ENCODE measurements at regions of chr4 and their contacts with region 1.

Region 1: DNA sequence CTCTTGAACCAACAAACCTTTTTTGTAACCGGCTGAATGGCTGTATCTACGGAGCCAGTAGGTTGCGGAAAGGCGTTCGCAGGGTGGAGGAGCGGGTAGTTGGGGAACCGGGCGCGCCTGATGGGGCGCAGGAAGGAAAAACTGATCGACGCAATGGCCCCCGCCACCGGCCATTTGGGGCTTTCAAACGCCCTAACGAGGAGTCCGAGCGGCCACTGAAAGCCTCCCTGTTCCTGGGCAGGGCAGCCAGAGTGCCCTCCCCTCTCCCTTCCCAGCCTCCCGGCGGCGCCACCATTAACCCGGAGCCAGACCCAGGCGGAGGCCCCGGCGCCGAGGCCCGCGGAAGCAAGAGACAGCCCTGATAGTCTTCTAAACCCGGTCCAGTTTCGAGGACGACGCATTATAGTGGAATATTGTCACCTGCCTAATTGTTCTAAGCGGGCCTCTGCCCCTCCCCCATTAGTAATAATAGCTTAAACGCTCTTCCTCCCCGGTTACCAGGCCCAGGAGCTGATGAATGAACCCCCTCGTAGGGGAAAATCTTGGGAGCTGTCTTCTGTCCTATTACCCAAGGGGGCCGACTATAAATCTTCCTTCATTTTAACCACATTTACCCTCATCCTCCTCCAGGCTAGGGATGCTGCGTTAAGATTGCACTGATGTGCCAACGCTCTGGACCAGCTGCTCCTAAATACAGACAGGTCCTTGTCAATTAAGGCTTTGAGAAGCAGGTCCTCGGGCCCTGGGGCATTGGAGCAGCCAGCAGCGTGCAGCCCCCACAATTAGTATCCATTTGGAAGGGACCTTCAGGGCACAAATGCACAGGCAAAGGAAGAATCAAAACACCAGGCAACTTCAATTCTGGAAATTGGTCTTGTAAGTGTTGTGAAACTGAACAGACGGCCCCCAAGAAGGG is 61.6 kb upstream of the TMEM33 start:
- DNase-seq: peak; percentile 88
- H3K4me3 ChIP-seq: peak overlapping the region; percentile 3 to 36; a peak in 3 of 4 replicates
- H3K27ac ChIP-seq: peak overlapping the region in 1 of 2 experiments; percentile 99; a peak in 2 of 4 replicates
- H3K4me1 ChIP-seq: peaks cover 0 to 60% of the 10 kb centered on the region in 2 experiments; a peak in 2 of 4 replicates
- H3K27me3 ChIP-seq: peaks cover 29% of the 10 kb centered on the region
- CTCF ChIP-seq: no peak
- EP300 ChIP-seq: peak; percentile 55 to 99; a peak in 3 of 4 replicates
- RAD21 ChIP-seq: 0 out of 2 replicates have a peak, but pooled peaks have one; percentile 7

Region 2: GRCh38 chr4:41741354-41741753 is 132.3 kb before region 1 on chr4:
- CTCF ChIA-PET with region 1: interaction called, 4 read pairs
- POLR2A ChIA-PET with region 1: interaction called, 461 read pairs
- DNase-seq: no peak
- H3K4me3 ChIP-seq: no peak overlapping the region
- H3K27ac ChIP-seq: no peak overlapping the region; a peak in 2 of 4 replicates
- H3K4me1 ChIP-seq: peaks cover 0 to 16% of the 10 kb centered on the region in 2 experiments; a peak in 2 of 4 replicates
- H3K27me3 ChIP-seq: peaks cover 23% of the 10 kb centered on the region
- CTCF ChIP-seq: no peak
- EP300 ChIP-seq: no peak
- RAD21 ChIP-seq: no peak

Region 3: GRCh38 chr4:41784191-41784979 is 89.3 kb before region 1 on chr4:
- CTCF ChIA-PET with region 1: no interaction called
- POLR2A ChIA-PET with region 1: interaction called, 19 read pairs
- DNase-seq: peak; percentile 62
- H3K4me3 ChIP-seq: no peak overlapping the region; a peak in 1 of 4 replicates
- H3K27ac ChIP-seq: peak overlapping the region in 1 of 2 experiments; percentile 98; a peak in 2 of 4 replicates
- H3K4me1 ChIP-seq: peaks cover 0 to 24% of the 10 kb centered on the region in 2 experiments; a peak in 2 of 4 replicates
- H3K27me3 ChIP-seq: no peaks in the 10 kb centered on the region
- CTCF ChIP-seq: no peak
- EP300 ChIP-seq: peak in 1 of 2 experiments; percentile 83; a peak in 2 of 4 replicates
- RAD21 ChIP-seq: no peak

Region 4: GRCh38 chr4:41822325-41822724 is 51.3 kb before region 1 on chr4:
- CTCF ChIA-PET with region 1: interaction called, 4 read pairs
- POLR2A ChIA-PET with region 1: interaction called, 22 read pairs
- DNase-seq: peak; percentile 45
- H3K4me3 ChIP-seq: no peak overlapping the region
- H3K27ac ChIP-seq: peak overlapping the region in 1 of 2 experiments; percentile 98; a peak in 2 of 4 replicates
- H3K4me1 ChIP-seq: peaks cover 0 to 24% of the 10 kb centered on the region in 2 experiments; a peak in 2 of 4 replicates
- H3K27me3 ChIP-seq: no peaks in the 10 kb centered on the region
- CTCF ChIP-seq: no peak
- EP300 ChIP-seq: peak in 1 of 2 experiments; percentile 98; a peak in 2 of 4 replicates
- RAD21 ChIP-seq: peak; percentile 37

Region 5: GRCh38 chr4:41832961-41833360 is 40.7 kb before region 1 on chr4:
- CTCF ChIA-PET with region 1: interaction called, 3 read pairs
- POLR2A ChIA-PET with region 1: interaction called, 25 read pairs
- DNase-seq: no peak
- H3K4me3 ChIP-seq: no peak overlapping the region
- H3K27ac ChIP-seq: peak overlapping the region in 1 of 2 experiments; percentile 88; a peak in 2 of 4 replicates
- H3K4me1 ChIP-seq: peaks cover 0 to 11% of the 10 kb centered on the region in 2 experiments; a peak in 2 of 4 replicates
- H3K27me3 ChIP-seq: no peaks in the 10 kb centered on the region
- CTCF ChIP-seq: no peak
- EP300 ChIP-seq: no peak
- RAD21 ChIP-seq: no peak

Region 6: GRCh38 chr4:41857226-41857641 is 16.4 kb before region 1 on chr4:
- CTCF ChIA-PET with region 1: interaction called, 51 read pairs
- POLR2A ChIA-PET with region 1: interaction called, 524 read pairs
- DNase-seq: peak; percentile 69
- H3K4me3 ChIP-seq: no peak overlapping the region
- H3K27ac ChIP-seq: peak overlapping the region in 1 of 2 experiments; percentile 100; a peak in 2 of 4 replicates
- H3K4me1 ChIP-seq: peaks cover 0 to 27% of the 10 kb centered on the region in 2 experiments; a peak in 2 of 4 replicates
- H3K27me3 ChIP-seq: peaks cover 14% of the 10 kb centered on the region; the same call in 1 of the 2 replicates
- CTCF ChIP-seq: no peak
- EP300 ChIP-seq: peak; percentile 4 to 98; a peak in 3 of 4 replicates
- RAD21 ChIP-seq: peak; percentile 32

Measured in SK-N-SH (cell line).